ENCODE measurements at regions of chr16 and their contacts with region 1.

Region 1: GRCh38 chr16:69613378-69614154 is 47.8 kb downstream of the NFAT5 start:
- DNase-seq: peak; percentile 51
- H3K4me3 Mint-ChIP-seq: peak overlapping the region; percentile 5
- H3K27ac Mint-ChIP-seq: peak overlapping the region; percentile 64
- H3K4me1 Mint-ChIP-seq: peaks cover 58% of the 10 kb centered on the region
- H3K27me3 Mint-ChIP-seq: no peaks in the 10 kb centered on the region
- CTCF ChIP-seq: no peak

Region 2: DNA sequence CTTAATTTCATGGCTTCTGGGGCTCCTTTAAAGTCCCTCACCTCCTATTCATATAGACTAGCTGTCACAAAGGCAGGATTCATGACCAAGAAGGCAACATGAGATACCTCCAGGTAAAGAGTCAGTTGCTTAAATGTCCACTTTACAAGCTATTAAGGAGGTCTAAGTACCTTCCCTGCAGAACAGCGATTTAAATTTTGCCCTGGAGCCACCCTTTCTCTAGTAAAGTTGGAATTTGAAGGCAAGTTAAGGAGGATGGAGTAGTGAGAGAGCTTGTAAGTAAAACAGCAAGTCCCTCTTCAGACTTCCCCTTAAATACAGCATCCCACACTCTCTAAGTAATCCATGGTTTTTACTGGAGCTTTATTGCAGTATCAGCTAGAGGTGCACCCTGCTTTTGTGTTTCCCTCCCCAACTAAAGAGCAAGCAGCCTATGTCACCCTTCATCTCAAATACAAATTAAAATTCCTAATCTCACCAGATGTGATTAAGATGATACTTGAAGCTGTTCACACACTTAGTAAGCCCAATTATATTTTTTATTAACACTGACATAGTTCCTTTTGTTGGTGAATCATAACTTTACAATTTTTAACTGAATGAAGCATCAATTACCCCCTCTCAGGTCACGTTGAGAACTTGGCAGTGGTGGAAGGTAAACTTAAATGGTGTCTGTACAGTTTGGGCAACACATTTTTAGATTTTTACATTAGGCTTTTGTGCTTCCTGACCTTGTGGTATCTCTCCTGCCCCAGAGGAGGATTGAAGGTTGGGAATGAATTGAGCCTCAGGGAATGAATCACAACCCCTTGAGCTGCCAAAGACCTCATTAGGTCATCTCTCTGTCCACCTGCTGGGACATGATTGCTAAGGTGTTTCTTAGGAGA is 661.3 kb before region 1 on chr16:
- CTCF ChIA-PET with region 1: interaction called, 11 read pairs
- intact Hi-C with region 1: no loop called
- DNase-seq: no peak
- H3K4me3 Mint-ChIP-seq: no peak overlapping the region
- H3K27ac Mint-ChIP-seq: no peak overlapping the region
- H3K4me1 Mint-ChIP-seq: peaks cover 8% of the 10 kb centered on the region
- H3K27me3 Mint-ChIP-seq: no peaks in the 10 kb centered on the region
- CTCF ChIP-seq: no peak

Region 3: GRCh38 chr16:69494993-69495392 is 118.6 kb before region 1 on chr16:
- CTCF ChIA-PET with region 1: no interaction called
- intact Hi-C with region 1: no loop called
- DNase-seq: peak; percentile 16
- H3K4me3 Mint-ChIP-seq: no peak overlapping the region
- H3K27ac Mint-ChIP-seq: no peak overlapping the region
- H3K4me1 Mint-ChIP-seq: no peaks in the 10 kb centered on the region
- H3K27me3 Mint-ChIP-seq: peaks cover 14% of the 10 kb centered on the region
- CTCF ChIP-seq: peak; percentile 40

Region 4: GRCh38 chr16:69565671-69566239 is 47.8 kb before region 1 on chr16 and contains the start of gene NFAT5:
- CTCF ChIA-PET with region 1: no interaction called
- intact Hi-C with region 1: loop called (anchors 5 kb)
- DNase-seq: peak; percentile 96
- H3K4me3 Mint-ChIP-seq: peak within 1 kb of the TSS; percentile 82
- H3K27ac Mint-ChIP-seq: peak within 1 kb of the TSS; percentile 90
- H3K4me1 Mint-ChIP-seq: peaks cover 15% of the 10 kb centered on the region
- H3K27me3 Mint-ChIP-seq: no peaks in the 10 kb centered on the region
- CTCF ChIP-seq: no peak
- total RNA-seq, gene NFAT5: 57.9 and 64.3 TPM in 2 replicates